ENCODE measurements at regions of chr1 and their contacts with region 1.

Region 1: GRCh38 chr1:53945433-53946251 is at the start of gene IFT25:
- DNase-seq: peak; percentile 94 to 98 (median 96)
- H3K4me3 ChIP-seq: peak within 1 kb of the TSS; percentile 69 to 99 (median 92)
- H3K27ac ChIP-seq: peak within 1 kb of the TSS in 58 of 59 donors; percentile 41 to 97 (median 89)
- H3K27me3 ChIP-seq: no peaks in the 10 kb centered on the region
- CTCF ChIP-seq: peak in 28 of 56 donors; percentile 2 to 43 (median 22)
- total RNA-seq, gene IFT25: 17.7 to 43.6 (median 29.5) TPM

Region 2: GRCh38 chr1:53837924-53838652 is 107.6 kb before region 1 on chr1 and contains the start of gene NDC1:
- intact Hi-C with region 1: loop called in 1 of 2 experiments (anchors 5 kb)
- DNase-seq: peak; percentile 79 to 95 (median 91)
- H3K4me3 ChIP-seq: peak within 1 kb of the TSS; percentile 67 to 97 (median 84)
- H3K27ac ChIP-seq: peak within 1 kb of the TSS; percentile 86 to 100 (median 99)
- H3K27me3 ChIP-seq: no peaks in the 10 kb centered on the region
- CTCF ChIP-seq: peak in 52 of 56 donors; percentile 22 to 73 (median 52)
- total RNA-seq, gene NDC1: 5.4 to 15.8 (median 10.1) TPM

Region 3: GRCh38 chr1:53860967-53861411 is 84.7 kb before region 1 on chr1:
- intact Hi-C with region 1: loop called in 1 of 2 experiments (anchors 5 kb)
- DNase-seq: peak in 3 of 10 donors; percentile 17 to 29 (median 25)
- H3K4me3 ChIP-seq: no peak overlapping the region
- H3K27ac ChIP-seq: no peak overlapping the region
- H3K27me3 ChIP-seq: no peaks in the 10 kb centered on the region
- CTCF ChIP-seq: peak; percentile 45 to 90 (median 77)

Region 4: GRCh38 chr1:53889304-53890298 is 56.0 kb before region 1 on chr1 and contains the start of gene YIPF1:
- intact Hi-C with region 1: loop called (anchors 2 to 5 kb)
- DNase-seq: peak; percentile 81 to 95 (median 94)
- H3K4me3 ChIP-seq: peak within 1 kb of the TSS; percentile 69 to 100 (median 93)
- H3K27ac ChIP-seq: peak within 1 kb of the TSS in 58 of 59 donors; percentile 1 to 92 (median 76)
- H3K27me3 ChIP-seq: no peaks in the 10 kb centered on the region
- CTCF ChIP-seq: peak in 25 of 56 donors; percentile 8 to 50 (median 23)
- total RNA-seq, gene YIPF1: 13.0 to 31.6 (median 23.0) TPM

Region 5: DNA sequence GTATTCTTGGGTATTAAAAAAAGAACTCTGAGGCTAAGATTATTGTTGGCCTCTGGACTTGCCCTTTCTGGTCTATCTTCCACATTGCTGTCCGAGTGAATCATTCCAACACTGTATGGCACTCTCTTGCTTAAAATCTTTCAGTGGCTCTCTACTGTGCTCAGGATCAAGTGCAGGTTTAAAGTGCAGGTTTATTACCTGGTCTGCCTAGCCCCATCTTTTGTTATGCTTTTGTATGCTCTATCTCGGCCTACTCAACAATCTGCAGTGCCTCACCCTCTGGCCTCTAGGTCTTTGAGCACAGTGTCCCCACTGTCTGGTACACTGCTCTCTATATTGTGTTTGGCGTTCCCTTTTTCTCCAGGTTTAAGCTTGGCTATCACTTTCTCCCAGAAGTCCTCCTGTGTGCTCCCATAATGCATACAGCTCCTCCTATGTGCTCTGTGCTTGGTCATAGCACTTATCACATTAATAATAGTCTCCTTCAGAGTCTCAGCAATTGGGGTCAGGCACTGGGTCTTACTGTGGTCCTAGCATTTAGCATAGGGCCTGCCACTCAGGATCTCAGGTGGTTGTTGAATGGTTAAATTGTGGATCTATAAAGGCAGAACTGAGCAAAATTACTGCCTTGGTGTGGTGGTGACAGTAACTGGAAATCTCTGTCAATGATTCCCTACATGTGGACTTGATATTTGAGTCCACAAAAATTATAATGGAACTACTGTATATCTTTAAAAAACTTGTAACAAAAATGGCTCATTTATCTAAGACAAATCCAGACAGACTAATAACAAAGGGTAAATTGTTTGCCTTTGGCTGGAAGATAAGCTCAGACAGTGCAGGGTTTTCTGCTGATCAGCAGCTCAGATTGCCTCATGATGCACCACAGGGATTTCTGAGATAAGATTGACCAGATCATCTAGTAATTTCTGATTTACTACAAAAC is 82.9 kb after region 1 on chr1:
- intact Hi-C with region 1: loop called in 1 of 2 experiments (anchors 5 kb)
- DNase-seq: peak in 1 of 10 donors; percentile 21
- H3K4me3 ChIP-seq: no peak overlapping the region
- H3K27ac ChIP-seq: peak overlapping the region in 55 of 59 donors; percentile 5 to 90 (median 75)
- H3K27me3 ChIP-seq: no peaks in the 10 kb centered on the region
- CTCF ChIP-seq: no peak

Region 6: DNA sequence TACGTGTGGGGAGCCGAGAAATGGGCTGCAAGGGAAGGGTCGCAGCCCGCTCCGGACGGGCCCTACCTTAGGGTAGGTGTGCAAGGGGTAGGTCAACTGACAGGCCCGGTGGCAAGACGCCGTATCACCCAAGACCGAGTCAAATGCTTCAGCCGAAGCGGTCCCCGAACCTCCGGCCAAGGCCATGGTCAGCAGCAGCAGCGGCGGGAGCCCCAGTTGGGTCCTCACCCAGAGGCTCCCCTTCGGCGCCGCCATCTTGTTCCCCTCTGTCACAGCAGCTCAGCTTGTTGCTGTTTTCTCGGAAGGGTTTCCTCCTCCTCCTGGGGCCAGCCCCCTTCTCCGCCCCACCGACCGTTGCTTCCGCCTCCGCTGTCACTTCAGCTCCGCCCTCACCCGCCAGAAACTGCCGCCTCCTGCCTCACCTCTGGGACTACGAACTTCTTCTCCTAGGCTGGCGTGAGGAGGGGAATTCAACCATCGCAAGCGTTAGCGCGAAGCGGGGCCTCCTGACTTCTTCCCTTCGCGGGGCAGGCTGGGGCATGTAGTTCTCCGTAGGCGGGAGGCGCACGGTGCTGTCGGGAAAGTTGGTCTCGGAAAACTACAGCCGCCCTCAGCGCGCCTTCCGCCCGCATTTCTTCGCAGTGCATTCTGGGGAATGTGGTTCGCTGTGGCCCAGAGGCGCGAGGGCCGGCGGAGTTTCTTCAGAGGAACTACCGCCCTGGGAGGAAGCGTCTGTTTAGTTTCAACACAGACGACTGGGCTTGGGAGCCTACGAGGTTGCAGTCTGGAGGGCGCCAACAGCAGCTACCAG is 107.5 kb after region 1 on chr1 and contains the starts of genes TCEANC2 and TMEM59:
- intact Hi-C with region 1: loop called (anchors 2 to 5 kb)
- DNase-seq: peak; percentile 94 to 99 (median 98)
- H3K4me3 ChIP-seq: peak within 1 kb of the TSS; percentile 71 to 100 (median 95)
- H3K27ac ChIP-seq: peak within 1 kb of the TSS; percentile 82 to 99 (median 96)
- H3K27me3 ChIP-seq: no peaks in the 10 kb centered on the region
- CTCF ChIP-seq: peak in 30 of 56 donors; percentile 4 to 57 (median 29)
- total RNA-seq, gene TCEANC2: 5.2 to 16.1 (median 8.6) TPM
- total RNA-seq, gene TMEM59: 155 to 435 (median 269) TPM

Region 7: GRCh38 chr1:54764133-54764921 is 818.7 kb after region 1 on chr1 and contains the start of gene PARS2:
- intact Hi-C with region 1: loop called in 1 of 2 experiments (anchors 5 kb)
- DNase-seq: peak; percentile 87 to 97 (median 96)
- H3K4me3 ChIP-seq: peak within 1 kb of the TSS; percentile 68 to 99 (median 89)
- H3K27ac ChIP-seq: peak within 1 kb of the TSS in 48 of 59 donors; percentile 21 to 87 (median 60)
- H3K27me3 ChIP-seq: no peaks in the 10 kb centered on the region
- CTCF ChIP-seq: peak in 25 of 56 donors; percentile 9 to 57 (median 27)
- total RNA-seq, gene PARS2: 2.5 to 7.0 (median 4.9) TPM